MCF 10A (cell line): ENCODE measurements at regions of chr2 and their contacts with region 1.

Region 1: DNA sequence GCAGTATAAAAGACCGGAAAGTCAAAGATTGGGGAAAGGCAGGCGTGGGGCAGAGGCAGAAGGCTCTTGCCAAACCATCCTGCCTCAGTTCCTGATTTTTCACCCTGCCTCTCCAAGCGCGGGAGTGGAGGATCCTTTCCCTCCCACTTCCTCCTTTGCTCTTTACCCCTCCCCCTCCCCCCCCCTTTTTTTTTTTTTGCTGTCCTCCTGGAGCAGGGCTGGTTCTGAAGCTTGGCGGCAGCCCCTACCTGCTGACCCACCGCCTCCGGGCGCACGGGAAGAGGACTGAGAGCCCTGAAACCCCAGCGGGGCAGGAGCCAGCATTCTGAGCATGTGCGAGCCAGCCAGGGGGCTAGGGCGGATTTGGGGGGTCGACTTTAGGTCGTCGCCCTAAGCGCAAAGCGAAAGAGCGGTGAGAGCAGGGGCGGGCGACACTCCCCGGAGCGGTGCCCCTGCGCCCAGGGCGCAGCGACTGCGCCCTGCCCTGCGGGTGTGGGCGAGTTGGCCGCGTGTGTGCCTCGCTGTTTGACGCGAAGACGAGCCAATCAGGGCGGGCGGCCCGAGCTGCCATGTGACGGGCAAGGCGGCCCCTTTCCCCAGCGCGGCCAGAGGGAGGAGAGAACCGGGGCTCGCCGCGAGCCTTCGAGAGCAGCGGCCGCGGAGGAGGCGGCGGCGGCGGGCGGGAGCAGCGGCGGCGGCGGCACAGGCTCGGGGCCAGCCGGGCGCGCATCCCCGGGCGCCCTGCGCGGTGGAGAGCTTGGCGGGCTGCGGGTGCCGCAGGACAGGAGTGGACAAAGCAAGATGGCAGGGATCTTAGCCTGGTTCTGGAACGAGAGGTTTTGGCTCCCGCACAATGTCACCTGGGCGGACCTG is at the start of gene CERS6:
- DNase-seq: peak; percentile 96
- H3K4me3 Mint-ChIP-seq: no peak within 1 kb of the TSS
- H3K27ac Mint-ChIP-seq: peak within 1 kb of the TSS; percentile 28
- H3K4me1 Mint-ChIP-seq: peaks cover 14% of the 10 kb centered on the region
- H3K27me3 Mint-ChIP-seq: no peaks in the 10 kb centered on the region
- CTCF ChIP-seq: no peak
- total RNA-seq, gene CERS6: 24.3 and 27.4 TPM in 2 replicates

Region 2: GRCh38 chr2:168466819-168467565 is 11.1 kb after region 1 on chr2:
- CTCF ChIA-PET with region 1: interaction called, 6 read pairs
- POLR2A ChIA-PET with region 1: interaction called, 12 read pairs
- intact Hi-C with region 1: no loop called
- DNase-seq: no peak
- H3K4me3 Mint-ChIP-seq: no peak overlapping the region
- H3K27ac Mint-ChIP-seq: no peak overlapping the region
- H3K4me1 Mint-ChIP-seq: peaks cover 29% of the 10 kb centered on the region
- H3K27me3 Mint-ChIP-seq: no peaks in the 10 kb centered on the region
- CTCF ChIP-seq: no peak

Region 3: GRCh38 chr2:168518555-168519066 is 62.7 kb after region 1 on chr2:
- CTCF ChIA-PET with region 1: no interaction called
- POLR2A ChIA-PET with region 1: interaction called, 8 read pairs
- intact Hi-C with region 1: loop called (anchors 5 kb)
- DNase-seq: peak; percentile 84
- H3K4me3 Mint-ChIP-seq: peak overlapping the region; percentile 27
- H3K27ac Mint-ChIP-seq: peak overlapping the region; percentile 60
- H3K4me1 Mint-ChIP-seq: peaks cover 51% of the 10 kb centered on the region
- H3K27me3 Mint-ChIP-seq: no peaks in the 10 kb centered on the region
- CTCF ChIP-seq: no peak

Region 4: GRCh38 chr2:168565112-168565511 is 109.2 kb after region 1 on chr2:
- CTCF ChIA-PET with region 1: no interaction called
- POLR2A ChIA-PET with region 1: interaction called, 10 read pairs
- intact Hi-C with region 1: no loop called
- DNase-seq: peak; percentile 94
- H3K4me3 Mint-ChIP-seq: peak overlapping the region; percentile 28
- H3K27ac Mint-ChIP-seq: peak overlapping the region; percentile 87
- H3K4me1 Mint-ChIP-seq: peaks cover 32% of the 10 kb centered on the region
- H3K27me3 Mint-ChIP-seq: no peaks in the 10 kb centered on the region
- CTCF ChIP-seq: no peak

Region 5: GRCh38 chr2:168607992-168608391 is 152.1 kb after region 1 on chr2:
- CTCF ChIA-PET with region 1: no interaction called
- POLR2A ChIA-PET with region 1: interaction called, 4 read pairs
- intact Hi-C with region 1: loop called (anchors 5 kb)
- DNase-seq: peak; percentile 44
- H3K4me3 Mint-ChIP-seq: no peak overlapping the region
- H3K27ac Mint-ChIP-seq: peak overlapping the region; percentile 86
- H3K4me1 Mint-ChIP-seq: peaks cover 33% of the 10 kb centered on the region
- H3K27me3 Mint-ChIP-seq: no peaks in the 10 kb centered on the region
- CTCF ChIP-seq: no peak